Activated CD4-positive, alpha-beta T cell treated with anti-CD3 and anti-CD28 coated beads, Interleukin-2, amount 10 ng/mL, durations not matched to agents 24 days and 14 days (primary cell): ENCODE measurements at regions of chr6 and their contacts with region 1.

Region 1: GRCh38 chr6:127893541-127893940 is 7.3 kb downstream of the THEMIS start:
- DNase-seq: no peak
- H3K4me3 Mint-ChIP-seq: peak overlapping the region; percentile 85
- H3K27ac Mint-ChIP-seq: peak overlapping the region; percentile 91
- H3K4me1 Mint-ChIP-seq: peaks cover 39% of the 10 kb centered on the region
- H3K27me3 Mint-ChIP-seq: no peaks in the 10 kb centered on the region

Region 2: DNA sequence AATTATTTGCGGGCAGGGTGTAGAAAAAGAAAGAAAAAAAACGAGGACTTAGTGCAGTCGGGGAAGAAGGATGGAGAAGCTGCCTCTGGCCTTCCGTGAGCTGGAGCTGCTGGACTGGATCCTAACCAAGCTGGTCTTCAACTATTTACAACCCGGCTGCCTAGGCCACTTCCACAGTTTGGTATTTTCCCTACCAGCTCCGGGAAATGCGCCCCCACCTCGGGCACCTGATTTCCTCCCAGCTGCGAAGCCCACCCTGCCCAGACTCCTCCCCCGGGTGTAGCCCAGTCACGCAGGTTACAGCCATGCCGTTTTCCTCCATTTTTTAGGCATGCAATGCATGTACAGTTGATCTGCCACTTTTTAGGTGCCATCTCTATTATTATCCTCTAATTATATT is 13.9 kb before region 1 on chr6:
- intact Hi-C with region 1: loop called (anchors 1 kb)
- DNase-seq: no peak
- H3K4me3 Mint-ChIP-seq: peak overlapping the region; percentile 61
- H3K27ac Mint-ChIP-seq: no peak overlapping the region
- H3K4me1 Mint-ChIP-seq: peaks cover 43% of the 10 kb centered on the region
- H3K27me3 Mint-ChIP-seq: no peaks in the 10 kb centered on the region